Right ventricle myocardium superior (tissue), 1 donor: ENCODE measurements at regions of chr22 and their contacts with region 1.

Region 1: GRCh38 chr22:37538590-37539357 is 19.6 kb upstream of the CARD10 start:
- DNase-seq: peak; percentile 95
- ATAC-seq: peak; percentile 99

Region 2: DNA sequence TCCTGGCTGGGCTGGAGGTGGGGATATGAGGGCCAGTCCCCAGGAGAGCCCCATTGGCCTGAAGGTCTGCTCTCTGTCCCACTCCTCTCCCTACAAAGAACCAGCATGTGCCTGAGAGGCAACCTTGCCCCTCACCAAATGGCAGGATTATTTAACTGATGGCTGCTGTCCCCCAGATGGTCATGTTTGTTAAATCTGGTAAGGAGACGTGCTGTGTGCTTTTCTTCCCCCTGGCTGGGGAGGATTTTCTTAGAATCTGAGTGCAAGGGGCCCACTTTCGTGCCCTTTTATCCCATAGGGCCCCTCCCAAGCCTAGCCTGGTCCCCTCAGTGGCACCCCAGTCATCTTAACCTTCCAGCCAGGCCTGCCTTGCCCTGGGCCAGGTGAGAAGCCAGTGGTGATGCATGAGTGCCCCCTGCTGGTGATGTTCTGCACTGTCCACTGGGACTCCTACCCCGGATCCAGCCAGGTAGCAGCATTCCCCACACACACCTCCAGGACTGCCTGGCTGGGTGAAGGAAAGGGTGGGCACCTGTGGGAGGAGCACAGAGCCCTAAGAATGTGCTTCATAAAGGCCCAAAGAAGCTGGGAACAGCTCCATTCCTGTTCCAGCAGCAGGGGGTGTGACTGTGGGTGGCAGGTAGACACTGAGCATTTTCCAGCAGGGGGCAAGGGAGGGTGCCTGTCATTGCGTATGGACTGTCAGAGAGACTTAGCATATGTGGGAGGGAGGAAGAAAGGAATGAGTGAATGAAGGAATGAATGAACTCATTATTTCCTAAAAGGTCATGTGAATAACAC is 81.5 kb before region 1 on chr22:
- intact Hi-C with region 1: no loop called
- DNase-seq: peak; percentile 77
- ATAC-seq: peak; percentile 82

Region 3: GRCh38 chr22:37566903-37567820 is 28.4 kb after region 1 on chr22:
- intact Hi-C with region 1: loop called (anchors 2 kb)
- DNase-seq: peak; percentile 90
- ATAC-seq: peak; percentile 73

Region 4: GRCh38 chr22:37591823-37592404 is 53.1 kb after region 1 on chr22:
- intact Hi-C with region 1: loop called (anchors 2 kb)
- DNase-seq: no peak
- ATAC-seq: no peak